ENCODE measurements at regions of chr3 and their contacts with region 1.

Region 1: DNA sequence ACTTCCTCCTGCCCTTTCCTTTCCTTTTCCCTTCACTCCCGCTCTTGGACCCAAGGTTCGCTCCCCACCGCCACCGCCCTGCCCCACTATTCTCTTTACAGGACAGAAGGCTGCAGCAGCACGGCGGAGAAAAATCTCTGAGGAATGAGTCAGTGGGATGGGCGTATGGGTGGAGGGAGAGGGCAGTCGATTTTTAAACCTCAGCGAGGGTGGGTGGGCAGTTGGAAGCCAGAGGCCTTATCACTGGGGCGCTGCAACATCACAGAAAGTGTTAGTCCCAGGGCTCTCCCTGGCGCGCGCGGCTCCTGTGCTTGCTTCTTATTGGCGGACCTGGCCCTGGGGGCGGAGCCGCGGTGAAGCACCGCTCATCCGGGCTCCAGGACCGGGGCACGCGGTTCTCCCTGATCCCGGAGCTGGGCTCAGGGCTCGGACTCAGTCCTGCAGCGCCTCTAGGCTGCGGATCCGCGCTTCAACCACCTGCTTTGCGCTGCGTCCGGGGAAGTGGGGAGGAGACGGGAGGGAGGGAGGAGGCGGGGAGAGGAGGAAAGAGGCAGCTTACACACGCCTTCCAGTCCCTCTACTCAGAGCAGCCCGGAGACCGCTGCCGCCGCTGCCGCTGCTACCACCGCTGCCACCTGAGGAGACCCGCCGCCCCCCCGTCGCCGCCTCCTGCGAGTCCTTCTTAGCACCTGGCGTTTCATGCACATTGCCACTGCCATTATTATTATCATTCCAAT is at the start of gene ALCAM:
- DNase-seq: peak; percentile 89
- H3K4me3 ChIP-seq: peak within 1 kb of the TSS; percentile 94 to 99
- H3K27ac ChIP-seq: peak within 1 kb of the TSS; percentile 97 to 98
- H3K4me1 ChIP-seq: peaks cover 8 to 28% of the 10 kb centered on the region in 2 experiments; a peak in 2 of 4 replicates
- H3K27me3 ChIP-seq: no peaks in the 10 kb centered on the region
- CTCF ChIP-seq: peak; percentile 73
- EP300 ChIP-seq: peak in 1 of 2 experiments; percentile 48; a peak in 3 of 4 replicates
- RAD21 ChIP-seq: peak; percentile 91
- polyA plus RNA-seq, gene ALCAM: 58.3 and 87.2 TPM in 2 replicates

Region 2: DNA sequence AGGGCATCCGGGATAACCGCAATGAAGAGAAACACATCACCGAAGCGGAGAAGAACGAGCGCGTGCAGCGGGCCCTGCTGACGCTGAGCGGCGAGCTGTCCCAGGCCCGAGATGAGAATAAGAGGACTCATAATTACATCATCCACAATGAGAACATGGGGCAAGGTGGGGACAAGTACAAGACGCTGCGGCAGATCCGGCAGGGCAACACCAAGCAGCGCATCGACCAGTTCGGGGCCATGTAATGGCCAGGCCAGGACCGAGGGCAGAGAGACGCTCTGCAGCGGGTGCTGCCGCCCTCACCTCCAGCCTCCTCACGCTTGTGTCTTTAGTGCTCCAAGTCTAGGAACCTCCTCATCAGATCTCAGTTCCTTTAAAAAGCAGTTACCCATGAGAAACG is 863.5 kb before region 1 on chr3:
- CTCF ChIA-PET with region 1: no interaction called
- POLR2A ChIA-PET with region 1: no interaction called
- DNase-seq: no peak
- H3K4me3 ChIP-seq: no peak overlapping the region
- H3K27ac ChIP-seq: no peak overlapping the region
- H3K4me1 ChIP-seq: no peaks in the 10 kb centered on the region
- H3K27me3 ChIP-seq: no peaks in the 10 kb centered on the region
- CTCF ChIP-seq: no peak
- EP300 ChIP-seq: no peak
- RAD21 ChIP-seq: no peak

Region 3: GRCh38 chr3:104596551-104596950 is 769.9 kb before region 1 on chr3:
- CTCF ChIA-PET with region 1: interaction called, 63 read pairs
- POLR2A ChIA-PET with region 1: no interaction called
- DNase-seq: peak; percentile 14
- H3K4me3 ChIP-seq: no peak overlapping the region; a peak in 1 of 4 replicates
- H3K27ac ChIP-seq: no peak overlapping the region
- H3K4me1 ChIP-seq: no peaks in the 10 kb centered on the region; a peak in 1 of 4 replicates
- H3K27me3 ChIP-seq: no peaks in the 10 kb centered on the region
- CTCF ChIP-seq: peak; percentile 60
- EP300 ChIP-seq: no peak
- RAD21 ChIP-seq: peak; percentile 80

Region 4: GRCh38 chr3:105355408-105356061 is 11.0 kb before region 1 on chr3:
- CTCF ChIA-PET with region 1: interaction called, 20 read pairs
- POLR2A ChIA-PET with region 1: interaction called, 4 read pairs
- DNase-seq: peak; percentile 66
- H3K4me3 ChIP-seq: no peak overlapping the region; a peak in 1 of 4 replicates
- H3K27ac ChIP-seq: peak overlapping the region; percentile 68 to 99
- H3K4me1 ChIP-seq: peaks cover 28 to 47% of the 10 kb centered on the region in 2 experiments; a peak in 3 of 4 replicates
- H3K27me3 ChIP-seq: no peaks in the 10 kb centered on the region
- CTCF ChIP-seq: no peak
- EP300 ChIP-seq: peak; percentile 47 to 97; a peak in 3 of 4 replicates
- RAD21 ChIP-seq: peak; percentile 2; the same call in 1 of the 2 replicates

Region 5: DNA sequence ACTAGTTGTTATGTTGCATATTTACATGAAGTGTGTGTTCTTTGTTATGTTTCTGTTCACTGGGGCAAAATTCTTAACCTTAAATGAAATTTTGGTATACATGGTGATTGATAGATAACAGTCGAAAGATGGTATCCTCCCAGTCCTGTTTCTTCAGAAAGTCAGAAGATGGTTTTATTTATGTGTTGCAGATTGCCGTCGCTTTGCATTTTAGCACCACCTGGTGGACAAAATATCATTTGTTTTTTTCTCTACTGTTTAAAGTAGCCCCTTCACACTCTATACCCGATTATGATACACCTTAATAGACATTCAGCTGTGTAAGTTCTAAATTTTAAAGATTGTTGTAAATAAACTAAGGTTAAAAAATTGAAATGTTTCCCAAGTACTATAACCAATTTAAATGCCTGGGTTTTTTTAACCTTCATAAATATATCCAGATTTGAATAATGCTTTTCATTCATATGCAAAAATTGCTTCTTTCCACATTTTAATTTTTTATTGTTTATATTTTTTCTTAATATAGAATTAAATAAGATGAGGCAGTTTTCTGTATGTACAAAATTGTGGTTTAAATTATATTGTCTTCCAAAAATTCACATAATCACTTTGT is 152.4 kb after region 1 on chr3:
- CTCF ChIA-PET with region 1: interaction called, 56 read pairs
- POLR2A ChIA-PET with region 1: interaction called, 3 read pairs
- DNase-seq: peak; percentile 49
- H3K4me3 ChIP-seq: peak overlapping the region in 1 of 2 experiments; percentile 12; a peak in 1 of 4 replicates
- H3K27ac ChIP-seq: peak overlapping the region; percentile 8 to 53; a peak in 3 of 4 replicates
- H3K4me1 ChIP-seq: peaks cover 14 to 29% of the 10 kb centered on the region in 2 experiments
- H3K27me3 ChIP-seq: no peaks in the 10 kb centered on the region
- CTCF ChIP-seq: peak; percentile 79
- EP300 ChIP-seq: peak in 1 of 2 experiments; percentile 43; a peak in 1 of 4 replicates
- RAD21 ChIP-seq: peak; percentile 92